Body of pancreas (tissue), 4 donors: ENCODE measurements at regions of chr22 and their contacts with region 1.

Region 1: DNA sequence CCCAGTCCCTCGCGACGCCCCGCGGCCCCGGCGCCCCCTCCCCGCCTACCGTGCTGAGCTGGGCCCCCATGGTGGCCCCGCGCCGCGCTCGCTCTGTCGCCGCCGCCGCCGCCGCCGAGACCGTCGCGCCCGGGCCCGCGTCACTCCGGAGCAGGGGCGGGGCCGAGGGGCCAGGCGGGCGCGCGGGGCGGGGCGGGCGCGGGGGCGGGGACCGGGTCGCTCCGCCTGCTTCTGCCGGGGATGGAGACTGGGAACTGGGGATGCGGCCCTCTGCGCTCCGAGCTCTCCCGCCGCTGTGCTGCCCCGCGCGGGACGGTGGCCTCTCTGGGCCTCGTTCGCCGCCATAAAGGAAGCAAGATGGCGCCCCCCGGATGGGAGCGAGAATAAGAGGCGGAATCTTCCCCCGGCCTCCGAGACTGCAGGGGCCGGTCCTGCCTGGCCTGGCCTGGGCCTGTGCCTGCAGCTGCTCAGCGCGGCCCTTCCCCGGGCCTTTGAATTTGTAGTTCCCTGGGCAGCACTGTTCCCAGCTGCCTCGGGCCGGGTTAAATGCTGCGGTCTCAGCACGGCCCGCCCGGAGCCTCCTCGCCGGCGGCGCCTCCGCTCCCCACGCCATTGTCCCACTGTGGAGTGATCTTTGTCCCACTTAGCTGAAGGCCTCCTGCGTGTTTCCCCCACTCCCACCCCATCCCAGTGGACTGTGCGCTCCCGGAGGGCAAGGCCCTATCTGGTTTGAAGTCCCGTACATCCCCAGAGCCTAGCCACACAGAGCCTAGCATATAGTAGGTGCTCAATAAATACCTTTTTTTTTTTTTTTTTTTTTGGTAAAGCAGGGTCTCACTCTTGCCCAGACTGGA is at the start of gene CYB5R3:
- DNase-seq: peak; percentile 83
- ATAC-seq: peak; percentile 82
- H3K4me3 ChIP-seq: peak within 1 kb of the TSS; percentile 55 to 86
- H3K27ac ChIP-seq: peak within 1 kb of the TSS; percentile 90 to 96 (median 94)
- H3K4me1 ChIP-seq: peaks cover 51% of the 10 kb centered on the region
- H3K27me3 ChIP-seq: no peaks in the 10 kb centered on the region
- CTCF ChIP-seq: no peak
- POLR2A ChIP-seq: no peak
- total RNA-seq, gene CYB5R3: 41.8 to 50.8 TPM

Region 2: DNA sequence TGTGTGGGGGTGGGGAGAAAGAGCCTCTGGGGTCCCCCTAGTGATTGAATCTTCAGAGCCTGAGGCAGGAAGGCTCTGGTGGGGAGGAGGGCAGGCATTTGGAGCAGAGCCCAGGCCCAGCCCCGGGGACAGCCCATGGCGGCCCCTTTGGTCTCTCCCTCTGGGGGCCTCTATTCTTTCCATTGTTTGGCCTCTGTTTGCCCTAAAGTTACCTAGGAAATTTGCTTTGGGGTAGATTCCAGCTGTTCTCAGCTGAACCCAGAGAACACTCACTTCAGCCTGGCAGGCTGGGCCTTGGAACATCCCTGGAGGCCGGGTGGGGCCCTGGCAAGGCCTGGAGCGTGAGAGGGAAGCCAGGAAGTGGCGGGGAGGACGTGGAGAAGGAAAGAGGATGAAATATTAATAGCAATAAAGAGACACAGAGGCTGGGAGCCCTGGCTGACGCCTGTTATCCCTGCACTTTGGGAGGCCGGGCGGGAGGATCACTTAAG is 94.1 kb after region 1 on chr22:
- intact Hi-C with region 1: no loop called
- DNase-seq: peak; percentile 26 to 44 (median 43)
- ATAC-seq: peak; percentile 75
- H3K4me3 ChIP-seq: no peak overlapping the region
- H3K27ac ChIP-seq: peak overlapping the region in 2 of 4 donors; percentile 36 to 43
- H3K4me1 ChIP-seq: no peaks in the 10 kb centered on the region
- H3K27me3 ChIP-seq: no peaks in the 10 kb centered on the region
- CTCF ChIP-seq: no peak
- POLR2A ChIP-seq: no peak

Region 3: DNA sequence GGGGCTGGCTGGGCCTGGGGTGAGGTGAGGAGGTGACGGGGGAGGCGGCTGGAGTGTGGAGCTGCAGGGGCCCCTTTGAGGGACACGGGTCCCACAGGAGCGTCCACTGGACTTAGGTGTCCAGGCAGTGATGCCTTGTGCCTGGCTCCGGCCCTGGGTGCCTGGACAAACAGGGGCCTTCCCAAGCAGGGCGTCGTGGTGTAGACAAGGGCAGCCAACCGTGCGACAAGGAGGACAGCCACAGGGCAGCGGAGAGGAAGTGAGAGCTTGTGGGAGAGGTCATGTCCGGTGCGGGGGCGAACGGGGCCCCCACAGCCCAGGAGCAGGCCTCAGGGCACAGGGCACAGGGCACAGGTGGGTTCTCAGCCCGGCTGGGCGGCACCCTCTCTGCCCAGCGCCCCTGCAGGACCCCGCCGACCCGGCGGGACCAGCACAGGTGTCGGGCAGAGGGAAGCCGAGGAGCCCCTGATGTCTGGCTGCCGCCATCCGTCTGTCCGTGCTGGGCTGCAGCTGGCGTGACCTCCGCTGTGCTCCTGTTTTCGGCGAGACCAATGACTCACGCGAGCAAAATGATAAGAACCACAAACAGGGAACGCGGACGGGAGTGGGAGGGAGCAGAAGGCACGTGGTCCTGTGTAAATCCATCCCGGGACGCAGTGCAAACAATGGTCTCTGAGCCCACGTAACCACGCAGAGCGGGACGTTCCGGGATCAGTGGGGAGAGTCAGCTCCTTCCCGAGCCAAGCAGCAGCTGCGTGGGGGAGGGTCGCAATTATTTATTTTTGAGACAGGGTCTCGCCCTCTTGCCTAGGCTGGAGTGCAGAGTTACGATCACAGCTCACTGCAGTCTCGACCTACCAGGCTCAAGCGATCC is 120.3 kb after region 1 on chr22:
- intact Hi-C with region 1: loop called (anchors 10 kb)
- DNase-seq: peak; percentile 64 to 86 (median 79)
- ATAC-seq: peak; percentile 87
- H3K4me3 ChIP-seq: no peak overlapping the region
- H3K27ac ChIP-seq: no peak overlapping the region
- H3K4me1 ChIP-seq: peaks cover 30% of the 10 kb centered on the region
- H3K27me3 ChIP-seq: no peaks in the 10 kb centered on the region
- CTCF ChIP-seq: no peak
- POLR2A ChIP-seq: peak in 1 of 3 donors; percentile 17